HEK293 (cell line): ENCODE measurements at regions of chrX and their contacts with region 1.

Region 1: GRCh38 chrX:10189317-10190268 is 32.8 kb downstream of the CLCN4 start:
- H3K4me3 ChIP-seq: no peak overlapping the region
- H3K27ac ChIP-seq: no peak overlapping the region
- H3K4me1 ChIP-seq: no peaks in the 10 kb centered on the region
- CTCF ChIP-seq: peak; percentile 28; the same call in 1 of the 2 replicates

Region 2: DNA sequence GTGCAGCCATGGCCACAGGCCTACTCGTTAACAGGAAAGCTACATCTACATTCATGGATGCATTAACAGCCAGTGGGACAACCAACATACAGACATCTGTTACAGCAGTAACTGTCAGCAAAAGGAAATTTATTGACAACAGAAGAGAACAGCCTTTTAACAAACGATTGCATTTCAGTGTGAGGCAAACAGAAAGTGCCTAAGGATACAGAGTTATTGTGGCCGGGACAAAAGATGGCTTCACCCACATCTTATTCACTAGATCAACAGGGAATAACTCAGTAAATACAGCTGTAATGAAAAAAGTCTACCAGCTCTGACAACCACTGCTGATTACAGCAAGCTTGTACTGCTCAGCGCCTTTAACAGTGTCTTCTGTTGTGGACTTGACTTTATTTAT is 786.2 kb before region 1 on chrX:
- CTCF ChIA-PET with region 1: no interaction called
- POLR2A ChIA-PET with region 1: no interaction called
- H3K4me3 ChIP-seq: no peak overlapping the region
- H3K27ac ChIP-seq: no peak overlapping the region
- H3K4me1 ChIP-seq: no peaks in the 10 kb centered on the region
- CTCF ChIP-seq: no peak

Region 3: DNA sequence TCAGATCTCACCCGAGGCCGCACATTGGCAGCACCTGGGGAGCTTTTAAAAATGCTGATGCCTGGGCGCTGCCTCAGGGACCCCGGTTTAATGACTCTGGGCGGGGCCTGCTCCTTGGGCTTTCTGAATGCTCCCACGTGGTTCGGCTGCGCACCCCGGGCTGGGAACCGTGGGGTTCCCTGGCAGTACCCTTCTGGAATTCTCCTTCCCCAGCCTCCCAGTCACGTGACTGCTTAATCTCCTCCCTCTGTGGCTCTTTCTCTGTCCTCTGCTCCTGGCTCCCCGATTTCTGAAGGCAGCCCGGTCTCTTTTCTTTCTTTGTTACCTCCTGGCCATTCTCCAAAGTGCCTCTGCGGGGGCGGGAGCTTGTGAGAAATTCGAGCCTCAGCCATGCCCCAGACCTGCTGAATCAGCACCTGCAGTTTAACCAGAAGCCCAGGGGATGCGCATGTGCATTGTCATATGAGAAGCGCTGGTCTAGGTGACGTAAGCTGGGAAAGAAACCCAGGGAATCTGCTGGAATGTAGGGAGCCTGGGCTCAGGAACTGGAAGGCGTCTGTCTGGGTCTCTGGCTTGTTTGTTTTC is 16.2 kb before region 1 on chrX:
- CTCF ChIA-PET with region 1: interaction called, 33 read pairs
- POLR2A ChIA-PET with region 1: no interaction called
- H3K4me3 ChIP-seq: no peak overlapping the region
- H3K27ac ChIP-seq: no peak overlapping the region; the same call in 1 of the 2 replicates
- H3K4me1 ChIP-seq: no peaks in the 10 kb centered on the region
- CTCF ChIP-seq: no peak

Region 4: DNA sequence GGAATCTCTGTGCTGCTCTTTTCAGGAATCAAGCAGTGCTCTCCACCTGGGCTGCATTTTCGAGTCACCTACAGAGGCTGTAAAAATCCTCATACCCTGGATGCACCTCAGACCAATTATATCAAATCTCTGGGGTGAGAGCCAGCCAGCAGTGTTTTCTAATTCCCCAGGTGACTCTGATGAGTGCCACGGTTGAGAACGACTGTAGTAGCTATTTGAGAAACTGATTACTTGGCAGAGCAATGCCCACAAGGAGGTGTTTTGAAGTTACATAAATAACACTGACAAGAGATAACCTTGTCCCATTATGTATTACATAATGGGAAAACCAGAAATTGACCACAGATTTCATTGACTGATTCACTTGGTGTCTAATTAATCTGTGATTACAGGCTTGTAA is 14.0 kb after region 1 on chrX:
- CTCF ChIA-PET with region 1: interaction called, 10 read pairs
- POLR2A ChIA-PET with region 1: no interaction called
- H3K4me3 ChIP-seq: no peak overlapping the region
- H3K27ac ChIP-seq: no peak overlapping the region
- H3K4me1 ChIP-seq: no peaks in the 10 kb centered on the region
- CTCF ChIP-seq: no peak

Region 5: GRCh38 chrX:10615931-10616775 is 426.6 kb after region 1 on chrX:
- CTCF ChIA-PET with region 1: interaction called, 45 read pairs
- POLR2A ChIA-PET with region 1: no interaction called
- H3K4me3 ChIP-seq: no peak overlapping the region
- H3K27ac ChIP-seq: no peak overlapping the region
- H3K4me1 ChIP-seq: no peaks in the 10 kb centered on the region
- CTCF ChIP-seq: no peak

Region 6: DNA sequence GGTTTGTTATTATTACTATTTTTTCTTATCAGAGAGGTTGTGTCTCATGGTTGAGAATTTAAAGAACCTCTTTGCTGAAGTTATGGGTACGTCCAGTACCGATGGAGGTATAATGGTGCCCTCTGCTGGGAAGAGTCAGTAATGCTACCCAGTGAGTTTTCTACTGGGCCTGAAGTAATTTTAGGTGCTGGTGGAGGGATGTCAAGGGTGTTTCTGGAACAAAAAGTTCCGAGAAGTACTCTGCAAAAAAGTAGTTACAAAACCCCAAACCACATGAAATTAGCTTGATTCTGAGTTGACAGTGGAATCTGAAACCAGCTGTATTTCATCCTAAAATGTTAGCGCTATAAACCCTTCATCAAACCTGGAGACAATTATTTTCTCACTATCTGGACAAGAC is 533.3 kb after region 1 on chrX:
- CTCF ChIA-PET with region 1: interaction called, 60 read pairs
- POLR2A ChIA-PET with region 1: no interaction called
- H3K4me3 ChIP-seq: no peak overlapping the region
- H3K27ac ChIP-seq: no peak overlapping the region
- H3K4me1 ChIP-seq: no peaks in the 10 kb centered on the region
- CTCF ChIP-seq: no peak

Region 7: GRCh38 chrX:10769195-10769594 is 579.6 kb after region 1 on chrX:
- CTCF ChIA-PET with region 1: interaction called, 21 read pairs
- POLR2A ChIA-PET with region 1: no interaction called
- H3K4me3 ChIP-seq: no peak overlapping the region; the same call in 1 of the 2 replicates
- H3K27ac ChIP-seq: no peak overlapping the region
- H3K4me1 ChIP-seq: no peaks in the 10 kb centered on the region
- CTCF ChIP-seq: no peak

Region 8: GRCh38 chrX:11137543-11138139 is 948.0 kb after region 1 on chrX:
- CTCF ChIA-PET with region 1: interaction called, 31 read pairs
- POLR2A ChIA-PET with region 1: no interaction called
- H3K4me3 ChIP-seq: no peak overlapping the region
- H3K27ac ChIP-seq: no peak overlapping the region
- H3K4me1 ChIP-seq: no peaks in the 10 kb centered on the region
- CTCF ChIP-seq: no peak